Endothelial cell of umbilical vein (primary cell): ENCODE measurements at regions of chr10 and their contacts with region 1.

Region 1: DNA sequence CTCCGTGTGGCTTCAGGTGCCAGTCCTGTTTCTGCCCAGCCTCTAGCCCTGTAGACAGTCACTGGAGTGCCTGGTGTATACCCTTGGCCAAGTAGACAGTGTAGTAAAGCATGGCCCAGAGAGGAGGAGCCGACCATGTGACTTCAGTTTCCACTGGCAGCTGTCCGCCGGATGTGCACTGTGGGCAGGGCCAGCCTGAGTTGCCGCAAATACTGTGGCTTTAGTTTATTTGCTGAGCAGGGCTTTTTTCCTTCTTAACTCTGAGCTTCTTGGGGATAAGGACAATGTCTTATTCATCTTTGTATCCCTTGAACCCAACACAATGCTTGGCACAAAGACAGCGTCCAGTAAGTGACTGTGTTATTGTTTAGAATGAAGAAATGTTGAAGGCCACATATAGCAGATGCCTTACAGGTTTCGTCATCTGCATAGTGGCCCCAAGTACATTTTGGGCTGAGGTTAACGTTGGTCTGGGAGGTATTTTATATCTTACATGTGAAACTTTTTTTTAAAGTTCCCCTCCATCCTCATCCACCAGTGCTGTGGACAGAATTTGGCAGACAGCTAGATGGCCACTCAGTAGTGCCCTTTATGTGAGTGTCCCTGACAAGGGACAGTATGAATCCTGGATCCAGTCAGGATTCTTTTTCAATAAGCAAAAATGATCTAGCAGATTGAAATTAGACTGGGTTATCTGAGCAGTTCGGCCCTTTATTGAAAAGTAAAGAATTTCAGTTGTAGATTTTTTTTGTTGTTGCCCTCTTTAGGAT is 40.6 kb downstream of the CYP17A1 start:
- DNase-seq: peak; percentile 85
- H3K4me3 ChIP-seq: no peak overlapping the region
- H3K27ac ChIP-seq: peak overlapping the region; percentile 38
- H3K4me1 ChIP-seq: peaks cover 43% of the 10 kb centered on the region
- H3K27me3 ChIP-seq: no peaks in the 10 kb centered on the region
- CTCF ChIP-seq: no peak
- POLR2A ChIP-seq: no peak

Region 2: GRCh38 chr10:102782673-102783551 is 13.7 kb before region 1 on chr10:
- CTCF ChIA-PET with region 1: interaction called, 11 read pairs
- POLR2A ChIA-PET with region 1: interaction called, 4 read pairs
- dilution Hi-C with region 1: no loop called
- intact Hi-C with region 1: loop called (anchors 1 kb)
- DNase-seq: peak; percentile 97
- H3K4me3 ChIP-seq: peak overlapping the region in 1 of 3 experiments; percentile 24
- H3K27ac ChIP-seq: peak overlapping the region; percentile 77
- H3K4me1 ChIP-seq: peaks cover 49% of the 10 kb centered on the region
- H3K27me3 ChIP-seq: no peaks in the 10 kb centered on the region
- CTCF ChIP-seq: no peak
- POLR2A ChIP-seq: no peak